Activated T-helper 2 cell treated with anti-CD3 and anti-CD28 coated beads, Interferon-gamma antibody, Interleukin-2, Interleukin-4, amounts not matched to agents 10 μg/mL and 5 μg/mL and 100 μg/mL, durations not matched to agents 14 hours and 24 hours and 36 hours (primary cell): ENCODE measurements at regions of chr2 and their contacts with region 1.

Region 1: GRCh38 chr2:61905372-61906185 is at the start of gene COMMD1:
- DNase-seq: peak; percentile 73
- H3K4me3 Mint-ChIP-seq: peak within 1 kb of the TSS; percentile 98
- H3K27ac Mint-ChIP-seq: peak within 1 kb of the TSS; percentile 76
- H3K4me1 Mint-ChIP-seq: peaks cover 11% of the 10 kb centered on the region
- H3K27me3 Mint-ChIP-seq: no peaks in the 10 kb centered on the region
- total RNA-seq, gene COMMD1: 27.5 and 29.1 TPM in 2 replicates

Region 2: DNA sequence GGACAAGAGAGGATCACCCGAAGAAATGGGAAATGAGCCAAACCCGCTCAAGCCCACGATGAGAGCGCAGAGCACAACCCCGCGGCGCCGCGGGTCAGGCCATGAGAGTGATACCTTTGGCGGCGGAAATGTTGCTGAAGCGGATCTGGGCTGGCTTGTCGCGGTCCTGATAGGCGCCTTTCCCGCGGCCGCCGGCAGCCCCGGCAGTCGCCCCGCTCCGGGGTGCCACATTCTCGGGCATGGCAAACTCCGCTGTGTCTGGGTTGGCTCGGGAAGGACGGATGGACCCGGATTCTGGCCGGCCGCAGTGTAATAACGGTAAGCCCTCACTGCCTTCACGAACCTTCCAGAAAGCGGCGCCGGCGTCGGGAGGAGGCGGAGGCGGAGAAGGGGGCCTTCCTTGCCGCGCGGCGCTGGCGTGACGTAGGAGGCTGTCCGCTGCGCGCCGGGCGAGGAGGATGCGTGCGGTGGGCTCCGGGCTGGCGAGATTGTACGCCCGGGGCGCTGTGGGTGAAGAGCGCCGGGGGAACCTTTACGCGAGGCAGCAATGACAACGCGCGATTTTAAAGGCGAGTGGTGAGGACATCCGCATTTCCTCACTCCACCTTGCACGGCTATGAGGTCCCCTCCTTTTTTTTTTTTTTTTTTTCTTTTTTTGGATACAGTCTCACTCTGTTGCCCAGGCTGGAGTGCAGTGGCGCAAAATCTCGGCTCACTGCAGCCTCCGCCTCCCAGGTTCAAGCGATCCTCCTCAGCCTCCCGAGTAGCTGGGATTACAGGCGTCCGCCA is 17.1 kb before region 1 on chr2 and contains the start of gene CCT4:
- intact Hi-C with region 1: loop called (anchors 1 kb)
- DNase-seq: peak; percentile 88
- H3K4me3 Mint-ChIP-seq: peak within 1 kb of the TSS; percentile 96
- H3K27ac Mint-ChIP-seq: peak within 1 kb of the TSS; percentile 99
- H3K4me1 Mint-ChIP-seq: peaks cover 20% of the 10 kb centered on the region
- H3K27me3 Mint-ChIP-seq: no peaks in the 10 kb centered on the region
- total RNA-seq, gene CCT4: 360 and 367 TPM in 2 replicates

Region 3: GRCh38 chr2:62195421-62196277 is 290.1 kb after region 1 on chr2 and contains the start of gene B3GNT2:
- intact Hi-C with region 1: loop called (anchors 5 kb)
- DNase-seq: peak; percentile 74
- H3K4me3 Mint-ChIP-seq: peak within 1 kb of the TSS; percentile 90
- H3K27ac Mint-ChIP-seq: peak within 1 kb of the TSS; percentile 91
- H3K4me1 Mint-ChIP-seq: peaks cover 32% of the 10 kb centered on the region
- H3K27me3 Mint-ChIP-seq: peaks cover 11% of the 10 kb centered on the region
- total RNA-seq, gene B3GNT2: 29.0 and 29.3 TPM in 2 replicates

Region 4: GRCh38 chr2:62254056-62254917 is 348.7 kb after region 1 on chr2:
- intact Hi-C with region 1: no loop called
- DNase-seq: no peak
- H3K4me3 Mint-ChIP-seq: no peak overlapping the region
- H3K27ac Mint-ChIP-seq: no peak overlapping the region
- H3K4me1 Mint-ChIP-seq: peaks cover 2% of the 10 kb centered on the region
- H3K27me3 Mint-ChIP-seq: peaks cover 1% of the 10 kb centered on the region

Region 5: DNA sequence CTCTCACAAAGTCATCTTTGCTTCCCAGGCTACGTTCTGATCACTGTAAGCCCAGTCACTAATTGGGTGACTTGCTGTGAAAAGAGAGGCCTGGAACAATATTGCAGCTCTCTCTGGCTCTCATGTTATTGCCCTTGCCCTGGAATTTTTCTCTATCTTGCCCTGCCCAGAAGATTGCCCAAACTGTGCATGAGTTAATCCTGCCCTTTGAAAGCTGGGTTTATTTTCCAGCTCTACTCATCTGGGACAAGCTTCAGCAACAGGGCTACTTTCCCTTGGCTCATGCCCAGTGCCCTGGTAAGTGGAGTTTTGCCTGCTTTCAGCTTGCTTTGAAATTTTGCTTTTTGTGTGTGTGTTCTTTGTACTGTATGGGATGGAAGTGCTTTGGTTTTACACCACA is 793.1 kb after region 1 on chr2:
- intact Hi-C with region 1: loop called (anchors 10 kb)
- DNase-seq: no peak
- H3K4me3 Mint-ChIP-seq: no peak overlapping the region
- H3K27ac Mint-ChIP-seq: no peak overlapping the region
- H3K4me1 Mint-ChIP-seq: no peaks in the 10 kb centered on the region
- H3K27me3 Mint-ChIP-seq: peaks cover 18% of the 10 kb centered on the region